PC-9 (cell line): ENCODE measurements at regions of chr14 and their contacts with region 1.

Region 1: DNA sequence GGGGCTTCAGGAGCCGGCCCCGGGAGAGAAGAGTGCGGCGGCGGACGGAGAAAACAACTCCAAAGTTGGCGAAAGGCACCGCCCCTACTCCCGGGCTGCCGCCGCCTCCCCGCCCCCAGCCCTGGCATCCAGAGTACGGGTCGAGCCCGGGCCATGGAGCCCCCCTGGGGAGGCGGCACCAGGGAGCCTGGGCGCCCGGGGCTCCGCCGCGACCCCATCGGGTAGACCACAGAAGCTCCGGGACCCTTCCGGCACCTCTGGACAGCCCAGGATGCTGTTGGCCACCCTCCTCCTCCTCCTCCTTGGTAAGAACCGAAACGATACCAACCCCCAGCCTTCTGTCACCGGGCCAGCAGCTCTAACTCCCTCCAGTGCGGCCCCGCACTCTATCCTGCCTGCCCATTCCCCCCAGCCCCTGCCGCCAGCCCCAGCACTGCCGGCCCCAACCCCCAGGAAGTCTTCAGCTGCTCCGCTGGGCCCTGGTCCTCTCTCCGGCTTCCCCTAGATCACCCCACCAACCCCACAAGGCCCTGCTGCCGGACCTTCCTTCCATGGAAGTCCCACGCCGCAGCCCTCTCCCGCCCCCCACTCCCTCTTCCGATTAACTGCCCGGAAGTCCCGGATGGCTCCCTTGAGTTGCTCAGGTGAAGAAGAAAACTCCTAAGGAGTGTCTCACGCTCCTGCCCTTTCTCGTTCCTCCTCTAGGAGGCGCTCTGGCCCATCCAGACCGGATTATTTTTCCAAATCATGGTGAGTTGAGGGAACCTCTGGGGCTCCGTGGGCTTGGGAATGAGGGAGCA is 693 bp downstream of the LRP10 start:
- DNase-seq: peak; percentile 69 to 79
- H3K4me3 ChIP-seq: peak overlapping the region; percentile 83
- H3K27ac ChIP-seq: peak overlapping the region; percentile 95
- H3K4me1 ChIP-seq: peaks cover 17% of the 10 kb centered on the region
- H3K27me3 ChIP-seq: no peaks in the 10 kb centered on the region
- CTCF ChIP-seq: peak; percentile 91

Region 2: DNA sequence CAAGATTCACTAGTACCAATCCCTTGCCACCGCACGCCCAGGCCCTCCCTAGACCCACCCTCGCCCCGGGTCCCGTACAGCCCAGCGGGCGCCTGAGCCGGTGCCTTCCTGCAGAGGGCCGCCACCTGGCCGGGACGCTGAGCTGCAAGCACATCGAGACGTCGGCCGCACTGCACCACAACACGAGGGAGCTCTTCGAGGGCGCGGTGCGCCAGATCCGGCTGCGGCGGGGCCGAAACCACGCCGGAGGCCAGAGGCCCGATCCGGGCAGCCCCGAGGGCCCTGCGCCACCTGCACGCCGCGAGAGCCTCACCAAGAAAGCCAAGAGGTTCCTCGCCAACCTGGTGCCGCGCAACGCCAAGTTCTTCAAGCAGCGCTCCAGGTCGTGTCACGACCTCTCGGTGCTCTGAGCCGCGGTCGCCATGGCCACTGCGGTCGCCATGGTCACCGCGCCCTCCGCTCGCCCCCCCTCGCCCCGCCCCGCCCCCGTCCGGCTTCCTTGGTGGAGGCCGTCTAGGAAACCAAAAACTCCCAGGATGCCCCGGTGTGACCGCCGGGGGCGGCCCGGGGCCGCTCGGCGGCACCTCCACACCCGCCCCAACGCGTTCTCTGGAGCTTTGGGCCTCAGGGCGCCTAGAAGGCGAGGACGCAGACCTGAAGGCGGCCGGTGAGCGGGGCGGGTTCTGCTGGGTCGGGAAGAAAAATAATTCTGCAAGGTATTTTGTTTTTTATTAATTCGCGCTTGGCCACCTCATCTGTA is 14.4 kb after region 1 on chr14:
- CTCF ChIA-PET with region 1: interaction called, 4 read pairs
- POLR2A ChIA-PET with region 1: interaction called, 10 read pairs
- intact Hi-C with region 1: loop called (anchors 1 kb)
- DNase-seq: peak; percentile 63 to 66
- H3K4me3 ChIP-seq: peak overlapping the region; percentile 68
- H3K27ac ChIP-seq: peak overlapping the region; percentile 61
- H3K4me1 ChIP-seq: peaks cover 7% of the 10 kb centered on the region; the same call in 1 of the 2 replicates
- H3K27me3 ChIP-seq: no peaks in the 10 kb centered on the region
- CTCF ChIP-seq: no peak; the same call in 1 of the 2 replicates

Region 3: DNA sequence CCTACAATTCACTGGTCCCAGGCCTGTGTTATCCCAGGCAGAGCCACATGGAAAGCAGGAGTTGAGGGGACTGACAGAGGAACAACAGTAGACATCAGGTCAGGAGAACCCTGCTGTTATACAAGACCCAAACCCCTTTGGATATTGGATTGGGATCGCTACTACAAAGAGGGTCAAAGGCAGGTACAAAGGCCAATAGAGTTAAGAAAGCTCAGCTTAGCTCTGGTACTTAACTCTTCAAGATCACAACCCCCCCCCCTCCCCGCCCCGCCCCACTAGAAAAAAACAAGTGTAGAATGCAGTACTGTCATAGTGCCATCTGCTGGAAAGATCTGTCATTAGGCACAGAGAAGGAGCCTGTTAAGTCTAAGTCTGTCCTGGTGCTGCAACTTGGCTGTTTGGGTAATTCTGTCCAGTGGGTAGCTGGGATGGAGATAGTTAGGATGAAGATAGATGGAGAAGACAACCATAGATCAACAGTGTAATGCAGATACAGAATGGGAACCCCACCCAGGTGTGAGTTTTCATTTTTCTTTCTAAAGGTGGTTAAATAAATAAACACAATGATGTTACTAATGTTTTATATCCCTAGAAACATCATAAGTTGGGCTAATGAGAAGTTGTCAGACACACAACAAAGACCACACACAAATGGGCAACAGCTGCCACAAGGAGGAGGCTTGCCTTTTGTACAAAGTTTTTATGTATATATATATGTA is 28.0 kb after region 1 on chr14:
- CTCF ChIA-PET with region 1: no interaction called
- POLR2A ChIA-PET with region 1: no interaction called
- intact Hi-C with region 1: loop called (anchors 1 kb)
- DNase-seq: peak; percentile 24 to 41
- H3K4me3 ChIP-seq: no peak overlapping the region
- H3K27ac ChIP-seq: no peak overlapping the region
- H3K4me1 ChIP-seq: peaks cover 15% of the 10 kb centered on the region
- H3K27me3 ChIP-seq: no peaks in the 10 kb centered on the region
- CTCF ChIP-seq: peak; percentile 62

Region 4: DNA sequence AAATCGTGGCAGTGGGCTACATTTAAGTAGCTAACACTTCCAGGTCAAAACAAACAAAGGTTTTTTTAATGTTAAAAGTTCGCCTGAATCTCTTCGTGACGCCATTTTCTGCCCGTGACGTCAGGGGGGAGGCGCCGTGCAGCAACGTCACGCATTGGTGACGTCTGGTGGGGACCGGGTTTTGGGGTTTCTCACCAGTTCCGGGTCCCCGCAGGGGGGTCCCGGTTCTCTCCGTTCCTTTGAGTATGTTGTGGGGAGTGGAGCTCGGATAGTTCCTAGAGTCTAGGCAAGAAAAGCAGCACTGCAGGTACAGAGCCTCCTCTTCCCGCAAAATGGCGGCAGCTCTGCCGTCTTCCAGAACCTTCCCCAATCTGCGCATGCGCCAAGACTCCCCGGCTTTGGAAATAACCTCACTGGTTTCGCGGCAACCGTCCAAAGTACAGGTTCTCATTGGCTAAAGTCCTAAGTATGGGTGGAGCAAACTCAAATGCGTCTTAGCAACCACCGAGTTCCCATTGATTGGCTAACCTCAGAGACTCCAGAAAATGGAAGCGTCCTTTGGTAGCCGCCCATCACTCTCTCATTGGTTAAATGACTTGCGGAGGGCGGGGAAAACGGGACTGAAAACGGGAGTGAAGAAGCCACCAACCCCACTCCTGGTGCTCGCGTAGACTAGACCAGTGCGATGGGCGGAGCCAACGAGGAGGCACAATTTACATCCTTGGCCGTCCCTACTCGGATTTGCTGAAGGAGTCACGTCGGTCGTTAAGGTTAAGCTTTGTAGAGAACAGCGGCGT is 46.8 kb after region 1 on chr14 and contains the start of gene RBM23:
- CTCF ChIA-PET with region 1: no interaction called
- POLR2A ChIA-PET with region 1: no interaction called
- intact Hi-C with region 1: loop called (anchors 5 kb)
- DNase-seq: peak; percentile 94 to 97
- H3K4me3 ChIP-seq: peak within 1 kb of the TSS; percentile 90
- H3K27ac ChIP-seq: peak within 1 kb of the TSS; percentile 90
- H3K4me1 ChIP-seq: peaks cover 9% of the 10 kb centered on the region
- H3K27me3 ChIP-seq: no peaks in the 10 kb centered on the region
- CTCF ChIP-seq: no peak
- total RNA-seq, gene RBM23: 68.7 and 76.5 TPM in 2 replicates

Region 5: DNA sequence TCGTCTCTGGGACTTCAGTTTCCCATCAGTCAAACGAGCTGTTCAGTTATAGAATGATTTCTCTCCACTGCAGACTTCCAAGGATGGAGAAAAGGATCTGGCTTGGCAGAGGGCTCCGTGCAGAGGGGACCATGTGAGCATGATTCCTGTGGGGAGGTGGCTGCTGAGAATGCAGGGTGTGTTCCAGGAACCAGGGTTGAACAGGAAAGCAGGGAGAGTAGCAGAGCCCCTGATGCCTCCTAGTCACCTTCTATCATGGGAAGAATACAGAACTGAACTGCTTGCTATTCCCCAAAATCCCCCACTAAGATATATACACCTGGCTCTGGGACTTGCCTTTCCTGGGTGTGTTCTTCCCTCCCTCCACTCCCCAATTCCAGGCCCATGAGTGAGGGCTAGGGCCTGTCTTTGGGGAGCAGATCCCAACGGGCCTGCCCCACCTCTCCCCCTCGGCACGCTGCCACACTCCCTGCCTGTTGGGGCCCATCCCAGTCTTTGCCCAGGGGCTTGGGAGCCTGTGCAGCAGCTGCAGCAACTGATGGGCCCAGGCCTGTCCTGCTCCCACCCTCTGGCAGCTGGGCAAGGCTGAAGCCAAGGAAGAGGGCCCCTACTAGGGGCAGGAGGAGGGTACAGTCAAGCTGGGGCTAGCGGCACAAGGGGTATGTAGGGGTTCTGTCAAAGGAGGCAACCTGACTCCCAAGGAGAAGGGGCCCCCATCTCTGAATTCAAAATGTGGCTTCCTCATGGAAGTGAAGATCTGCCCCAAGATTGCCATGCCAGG is 106.8 kb after region 1 on chr14:
- CTCF ChIA-PET with region 1: no interaction called
- POLR2A ChIA-PET with region 1: no interaction called
- intact Hi-C with region 1: loop called (anchors 1 kb)
- DNase-seq: peak in 1 of 2 experiments; percentile 51
- H3K4me3 ChIP-seq: peak overlapping the region; percentile 72; the same call in 1 of the 2 replicates
- H3K27ac ChIP-seq: peak overlapping the region; percentile 76
- H3K4me1 ChIP-seq: peaks cover 50% of the 10 kb centered on the region
- H3K27me3 ChIP-seq: no peaks in the 10 kb centered on the region
- CTCF ChIP-seq: no peak